Posterior cingulate gyrus (tissue), 11 donors: ENCODE measurements at regions of chr2 and their contacts with region 1.

Region 1: GRCh38 chr2:79855264-79856006 is 342.6 kb downstream of the CTNNA2 start:
- DNase-seq: peak in 6 of 10 donors; percentile 29 to 91 (median 52)

Region 2: DNA sequence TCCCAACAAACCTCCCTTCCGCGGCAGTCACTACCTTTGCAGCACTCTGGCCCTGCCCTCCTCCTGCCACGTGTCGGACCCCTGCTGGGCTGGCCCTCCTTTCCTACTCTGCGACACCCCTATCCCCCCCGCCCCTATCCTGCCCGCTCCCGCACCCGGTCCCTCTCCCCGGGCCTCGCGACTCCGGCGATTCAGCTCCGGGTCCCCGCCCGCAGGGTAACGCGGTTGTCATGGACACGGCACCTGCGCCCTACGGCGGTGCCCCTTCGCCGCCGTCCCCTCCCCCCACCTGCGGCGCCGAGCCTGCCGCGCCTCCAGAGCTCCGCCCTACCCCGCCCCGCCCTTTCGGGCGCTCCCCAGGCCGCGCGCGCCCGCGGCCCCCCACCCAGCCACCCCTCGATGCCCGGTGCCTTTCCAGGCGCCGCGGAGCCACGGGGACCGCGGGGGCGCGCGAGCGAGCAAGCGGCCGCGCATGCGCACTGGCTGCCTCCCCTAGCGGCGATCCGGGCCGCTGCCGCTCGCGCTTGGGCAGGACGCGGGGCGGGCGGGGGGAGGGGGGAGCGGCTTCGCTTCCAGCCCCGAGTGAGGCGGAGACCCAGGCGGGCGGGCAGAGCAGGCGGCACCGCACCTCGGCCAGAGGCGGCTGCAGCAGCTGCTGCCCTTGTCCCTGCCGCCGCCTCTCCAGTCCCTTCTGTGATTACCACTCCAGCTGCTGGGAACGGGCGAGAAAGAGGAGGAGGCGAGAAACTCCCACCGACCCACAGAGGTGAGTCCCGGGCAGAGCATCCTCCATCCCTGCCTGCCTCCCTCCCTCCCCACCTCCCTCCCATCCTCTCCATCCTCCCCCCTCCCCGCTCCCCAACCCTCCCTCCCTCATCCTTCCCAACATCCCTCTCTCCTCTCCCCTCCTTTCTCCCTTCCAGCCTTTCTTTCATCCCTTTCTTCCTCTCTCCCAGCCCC is 342.7 kb before region 1 on chr2 and contains the start of gene CTNNA2:
- intact Hi-C with region 1: loop called (anchors 10 kb)
- DNase-seq: peak; percentile 56 to 97 (median 76)

Region 3: GRCh38 chr2:79660557-79660956 is 194.9 kb before region 1 on chr2:
- intact Hi-C with region 1: loop called (anchors 10 kb)
- DNase-seq: no peak

Region 4: DNA sequence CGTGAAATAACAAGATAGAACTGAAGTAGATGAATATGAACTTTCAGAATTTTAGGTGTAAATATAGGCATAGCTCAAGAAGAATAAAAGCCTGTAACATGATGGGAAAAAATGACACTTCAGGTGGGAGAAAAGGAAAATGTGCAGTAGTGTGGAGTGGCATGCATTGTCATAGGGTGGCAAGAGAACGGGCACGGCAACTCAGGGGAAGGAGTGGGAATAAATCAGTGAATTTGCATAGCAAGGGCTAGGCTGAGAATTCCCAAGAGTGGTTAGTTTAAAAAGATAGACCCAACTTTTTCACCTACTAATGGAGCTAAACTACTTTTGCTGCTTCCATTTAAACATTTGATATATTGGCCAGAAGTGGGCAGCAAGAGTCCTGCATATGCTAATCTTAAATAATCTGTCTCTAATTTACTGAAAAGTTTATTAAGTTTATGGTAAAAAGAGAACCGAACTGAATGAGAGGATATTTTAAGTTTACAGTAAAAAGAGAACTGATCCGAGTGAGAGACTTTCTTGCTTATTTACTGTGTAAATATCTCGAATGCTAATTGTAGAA is 114.5 kb before region 1 on chr2:
- intact Hi-C with region 1: loop called (anchors 5 kb)
- DNase-seq: no peak